ENCODE measurements at regions of chr1 and their contacts with region 1.

Region 1: GRCh38 chr1:178542560-178543356 is 29.8 kb downstream of the TEX35 start:
- DNase-seq: peak; percentile 92
- H3K4me3 Mint-ChIP-seq: peak overlapping the region; percentile 87
- H3K27ac Mint-ChIP-seq: peak overlapping the region; percentile 72
- H3K4me1 Mint-ChIP-seq: peaks cover 4% of the 10 kb centered on the region
- H3K27me3 Mint-ChIP-seq: no peaks in the 10 kb centered on the region

Region 2: GRCh38 chr1:178532392-178532791 is 10.4 kb before region 1 on chr1:
- CTCF ChIA-PET with region 1: interaction called, 21 read pairs
- intact Hi-C with region 1: no loop called
- DNase-seq: peak; percentile 84
- H3K4me3 Mint-ChIP-seq: no peak overlapping the region
- H3K27ac Mint-ChIP-seq: no peak overlapping the region
- H3K4me1 Mint-ChIP-seq: no peaks in the 10 kb centered on the region
- H3K27me3 Mint-ChIP-seq: no peaks in the 10 kb centered on the region

Region 3: GRCh38 chr1:178725603-178726517 is 183.1 kb after region 1 on chr1:
- CTCF ChIA-PET with region 1: interaction called, 5 read pairs
- intact Hi-C with region 1: loop called (anchors 1 kb)
- DNase-seq: peak; percentile 80
- H3K4me3 Mint-ChIP-seq: peak overlapping the region; percentile 73
- H3K27ac Mint-ChIP-seq: no peak overlapping the region
- H3K4me1 Mint-ChIP-seq: peaks cover 24% of the 10 kb centered on the region
- H3K27me3 Mint-ChIP-seq: no peaks in the 10 kb centered on the region

Region 4: GRCh38 chr1:178749581-178750166 is 206.9 kb after region 1 on chr1:
- CTCF ChIA-PET with region 1: interaction called, 61 read pairs
- intact Hi-C with region 1: loop called (anchors 1 kb)
- DNase-seq: no peak
- H3K4me3 Mint-ChIP-seq: no peak overlapping the region
- H3K27ac Mint-ChIP-seq: no peak overlapping the region
- H3K4me1 Mint-ChIP-seq: no peaks in the 10 kb centered on the region
- H3K27me3 Mint-ChIP-seq: no peaks in the 10 kb centered on the region

Region 5: DNA sequence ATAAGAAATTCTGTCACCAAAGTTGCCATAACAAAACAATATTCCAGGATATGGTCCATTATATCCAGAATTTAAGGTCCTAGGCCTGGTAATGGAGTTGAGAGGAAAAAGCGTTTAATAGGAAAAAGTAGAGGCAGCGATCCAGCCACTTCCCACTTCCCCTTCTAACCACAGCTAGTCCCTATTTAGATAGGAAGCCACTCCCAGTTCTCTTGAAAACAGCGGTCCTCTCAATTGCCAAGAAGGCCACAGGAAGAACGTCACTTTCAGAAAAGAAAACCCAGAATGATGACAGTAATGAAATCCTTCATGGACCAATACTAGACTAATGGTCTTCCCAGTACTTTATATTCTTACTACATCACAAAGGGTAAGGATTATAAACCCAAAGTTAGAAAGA is 648.1 kb after region 1 on chr1:
- CTCF ChIA-PET with region 1: no interaction called
- intact Hi-C with region 1: loop called (anchors 1 kb)
- DNase-seq: no peak
- H3K4me3 Mint-ChIP-seq: no peak overlapping the region
- H3K27ac Mint-ChIP-seq: no peak overlapping the region
- H3K4me1 Mint-ChIP-seq: peaks cover 20% of the 10 kb centered on the region
- H3K27me3 Mint-ChIP-seq: no peaks in the 10 kb centered on the region

Measured in activated naive CD4-positive, alpha-beta T cell treated with anti-CD3 and anti-CD28 coated beads for 36 hours (primary cell).